ENCODE measurements at regions of chr3 and their contacts with region 1.

Region 1: GRCh38 chr3:139107424-139108252 is 62.9 kb upstream of the PRR23C start:
- DNase-seq: no peak
- H3K4me3 ChIP-seq: no peak overlapping the region
- H3K27ac ChIP-seq: no peak overlapping the region
- H3K4me1 ChIP-seq: peaks cover 0 to 3% (median 0%) of the 10 kb centered on the region in 4 donors
- H3K27me3 ChIP-seq: peaks cover 0 to 7% of the 10 kb centered on the region in 2 donors
- CTCF ChIP-seq: no peak

Region 2: GRCh38 chr3:137709011-137709601 is 1398.5 kb before region 1 on chr3:
- intact Hi-C with region 1: no loop called
- DNase-seq: no peak
- H3K4me3 ChIP-seq: no peak overlapping the region
- H3K27ac ChIP-seq: no peak overlapping the region
- H3K4me1 ChIP-seq: no peaks in the 10 kb centered on the region
- H3K27me3 ChIP-seq: no peaks in the 10 kb centered on the region
- CTCF ChIP-seq: no peak

Region 3: GRCh38 chr3:139222100-139222657 is 114.5 kb after region 1 on chr3:
- intact Hi-C with region 1: no loop called
- DNase-seq: no peak
- H3K4me3 ChIP-seq: no peak overlapping the region
- H3K27ac ChIP-seq: no peak overlapping the region
- H3K4me1 ChIP-seq: no peaks in the 10 kb centered on the region
- H3K27me3 ChIP-seq: no peaks in the 10 kb centered on the region
- CTCF ChIP-seq: no peak

Region 4: DNA sequence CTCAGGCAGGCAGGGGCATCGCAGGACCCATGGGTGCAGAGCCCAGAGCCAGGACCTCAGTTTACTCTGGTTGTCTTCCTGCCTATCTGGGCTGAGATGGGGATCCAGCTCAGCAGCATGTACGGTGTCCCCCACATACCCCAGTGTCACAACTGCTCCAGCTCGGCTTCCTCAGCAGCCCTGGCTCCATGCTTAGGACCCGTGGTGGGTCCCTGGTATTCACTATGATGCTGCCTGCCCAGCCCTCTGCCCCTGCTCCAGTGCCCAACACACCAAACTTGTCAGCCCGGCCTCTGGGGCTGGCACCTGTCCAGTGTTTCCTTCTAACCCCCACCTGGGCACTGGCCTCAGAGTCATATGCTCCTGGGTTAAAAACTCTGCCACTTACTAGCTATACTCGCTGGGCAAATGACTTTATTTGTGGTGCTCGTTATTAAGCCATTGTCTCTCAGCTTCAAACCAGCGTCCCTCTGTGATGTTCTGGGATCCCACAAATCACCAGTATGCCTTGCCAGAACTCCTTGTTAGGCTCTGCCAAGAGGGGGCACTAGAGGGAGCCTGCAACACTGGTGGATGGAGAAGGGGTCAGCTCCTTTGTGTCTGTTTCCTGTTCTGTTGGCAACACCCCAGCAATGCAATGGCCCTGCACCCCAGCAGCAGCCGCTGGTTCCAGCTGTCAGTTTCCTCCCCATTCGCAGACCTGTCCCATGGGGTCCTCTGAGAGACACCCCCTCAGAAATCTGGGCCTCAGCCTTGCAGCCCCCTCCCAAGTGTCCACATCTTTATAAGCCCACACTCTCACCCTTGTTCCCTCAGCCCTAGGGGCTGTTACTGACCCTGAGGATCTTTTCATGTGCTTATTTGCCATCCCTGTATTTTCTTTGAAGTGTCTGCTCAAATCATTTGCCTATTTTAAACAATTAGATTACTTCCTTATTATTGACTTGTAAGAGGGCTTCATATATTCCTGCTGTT is 212.1 kb after region 1 on chr3:
- intact Hi-C with region 1: loop called (anchors 5 kb)
- DNase-seq: no peak
- H3K4me3 ChIP-seq: no peak overlapping the region
- H3K27ac ChIP-seq: no peak overlapping the region
- H3K4me1 ChIP-seq: no peaks in the 10 kb centered on the region
- H3K27me3 ChIP-seq: peaks cover 0 to 15% of the 10 kb centered on the region in 2 donors
- CTCF ChIP-seq: no peak

Measured in tibial artery (tissue), 4 donors.